Ascending aorta (tissue), 2 donors: ENCODE measurements at regions of chr1 and their contacts with region 1.

Region 1: DNA sequence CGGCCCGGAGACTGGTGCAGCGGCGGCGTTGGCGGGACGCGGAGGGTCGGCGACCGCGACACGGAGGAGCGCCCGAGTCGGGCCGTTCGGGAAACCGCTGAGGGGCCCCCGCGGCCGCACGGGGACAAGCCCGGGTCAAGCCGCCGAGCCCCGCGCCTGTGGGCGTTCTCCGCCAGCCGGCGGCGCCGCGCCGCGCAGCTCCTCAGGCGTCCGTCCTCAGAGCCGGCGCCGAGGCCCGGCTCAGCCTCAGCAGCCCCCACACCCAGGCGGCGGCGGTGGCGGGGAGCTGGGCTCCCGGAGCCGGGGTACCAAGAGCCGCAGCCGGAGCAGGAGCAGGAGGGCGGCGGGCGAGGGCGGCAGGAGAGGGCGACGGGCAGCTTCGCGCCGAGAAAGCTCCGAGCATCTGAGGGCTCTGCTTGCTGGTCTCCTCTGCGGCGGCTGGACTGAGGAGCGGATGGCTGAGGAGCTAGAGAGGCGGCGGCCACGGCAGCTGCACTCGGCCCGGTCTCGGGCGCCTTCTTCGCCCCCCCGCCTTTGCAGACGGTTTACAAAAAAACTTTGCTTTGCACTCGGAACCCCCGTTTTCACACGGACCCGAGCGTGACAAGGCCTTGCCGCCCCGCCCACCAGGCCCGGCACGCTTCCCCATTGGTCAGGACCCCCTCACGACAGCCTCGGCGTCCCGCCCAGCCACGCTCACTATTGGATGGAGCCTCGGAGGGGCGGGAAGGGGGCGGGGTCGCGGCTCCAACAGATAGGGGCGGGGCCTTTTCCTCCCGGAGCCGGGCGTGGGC is at the start of gene SLC30A1:
- DNase-seq: peak; percentile 98 to 100
- H3K4me3 ChIP-seq: peak within 1 kb of the TSS; percentile 61 to 73
- H3K27ac ChIP-seq: peak within 1 kb of the TSS; percentile 92 to 97
- H3K4me1 ChIP-seq: peaks cover 9 to 46% of the 10 kb centered on the region in 2 donors
- H3K27me3 ChIP-seq: no peaks in the 10 kb centered on the region
- CTCF ChIP-seq: no peak
- total RNA-seq, gene SLC30A1: 8.9 TPM

Region 2: DNA sequence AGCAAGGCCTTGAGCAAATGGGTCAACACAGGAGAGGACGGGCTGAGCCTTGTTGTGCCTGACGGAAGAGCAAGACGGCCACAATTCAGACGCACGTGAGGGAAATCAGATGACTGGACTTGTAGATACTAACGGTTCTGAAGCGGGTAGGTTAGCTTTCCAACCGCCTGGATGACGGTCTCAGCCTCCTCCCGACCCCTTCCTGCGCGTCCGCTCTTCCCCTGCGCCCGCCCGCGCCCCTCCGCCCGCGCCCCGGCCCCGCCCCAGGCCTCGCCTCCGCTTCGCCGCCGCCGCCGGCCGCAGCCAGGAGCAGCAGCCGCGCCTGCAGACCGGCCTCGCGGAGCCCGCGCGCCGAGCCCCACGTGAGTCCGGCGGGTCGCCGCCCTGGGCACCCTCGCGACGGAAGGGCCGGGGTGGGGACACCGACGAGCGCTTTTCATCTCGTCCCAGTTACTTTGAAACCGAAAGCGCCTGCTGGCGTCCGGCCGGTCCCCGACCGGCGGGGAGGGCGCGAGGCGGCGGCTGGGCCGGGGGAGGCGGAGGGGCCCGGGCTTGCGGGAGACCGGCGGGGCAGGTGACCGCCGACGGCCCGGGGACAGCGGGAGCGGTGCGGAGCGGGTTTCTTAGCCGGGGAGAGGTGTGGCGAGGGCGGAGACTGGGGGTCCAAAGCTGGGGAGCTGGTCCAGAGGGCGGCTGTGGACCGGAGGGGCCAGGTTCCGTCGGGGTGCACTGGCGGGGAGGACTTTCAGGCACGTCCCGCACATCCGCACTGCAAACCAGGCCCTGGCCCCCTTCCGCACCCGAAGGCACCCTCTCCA is 252.1 kb before region 1 on chr1 and contains the start of gene TRAF5:
- intact Hi-C with region 1: loop called (anchors 5 kb)
- DNase-seq: peak in 1 of 2 donors; percentile 72
- H3K4me3 ChIP-seq: peak within 1 kb of the TSS; percentile 91 to 93
- H3K27ac ChIP-seq: peak within 1 kb of the TSS; percentile 84 to 98
- H3K4me1 ChIP-seq: peaks cover 15 to 31% of the 10 kb centered on the region in 2 donors
- H3K27me3 ChIP-seq: no peaks in the 10 kb centered on the region
- CTCF ChIP-seq: no peak
- total RNA-seq, gene TRAF5: 3.9 TPM

Region 3: GRCh38 chr1:211469938-211470529 is 108.8 kb before region 1 on chr1:
- intact Hi-C with region 1: loop called (anchors 5 kb)
- DNase-seq: peak; percentile 15 to 87
- H3K4me3 ChIP-seq: no peak overlapping the region
- H3K27ac ChIP-seq: no peak overlapping the region
- H3K4me1 ChIP-seq: peaks cover 0 to 5% of the 10 kb centered on the region in 2 donors
- H3K27me3 ChIP-seq: no peaks in the 10 kb centered on the region
- CTCF ChIP-seq: peak; percentile 63 to 88 (median 82)

Region 4: GRCh38 chr1:211551628-211552460 is 27.0 kb before region 1 on chr1:
- intact Hi-C with region 1: loop called (anchors 2 kb)
- DNase-seq: peak in 1 of 2 donors; percentile 68
- H3K4me3 ChIP-seq: peak overlapping the region in 1 of 2 donors; percentile 27
- H3K27ac ChIP-seq: peak overlapping the region; percentile 58 to 62
- H3K4me1 ChIP-seq: peaks cover 0 to 24% of the 10 kb centered on the region in 2 donors
- H3K27me3 ChIP-seq: no peaks in the 10 kb centered on the region
- CTCF ChIP-seq: no peak

Region 5: DNA sequence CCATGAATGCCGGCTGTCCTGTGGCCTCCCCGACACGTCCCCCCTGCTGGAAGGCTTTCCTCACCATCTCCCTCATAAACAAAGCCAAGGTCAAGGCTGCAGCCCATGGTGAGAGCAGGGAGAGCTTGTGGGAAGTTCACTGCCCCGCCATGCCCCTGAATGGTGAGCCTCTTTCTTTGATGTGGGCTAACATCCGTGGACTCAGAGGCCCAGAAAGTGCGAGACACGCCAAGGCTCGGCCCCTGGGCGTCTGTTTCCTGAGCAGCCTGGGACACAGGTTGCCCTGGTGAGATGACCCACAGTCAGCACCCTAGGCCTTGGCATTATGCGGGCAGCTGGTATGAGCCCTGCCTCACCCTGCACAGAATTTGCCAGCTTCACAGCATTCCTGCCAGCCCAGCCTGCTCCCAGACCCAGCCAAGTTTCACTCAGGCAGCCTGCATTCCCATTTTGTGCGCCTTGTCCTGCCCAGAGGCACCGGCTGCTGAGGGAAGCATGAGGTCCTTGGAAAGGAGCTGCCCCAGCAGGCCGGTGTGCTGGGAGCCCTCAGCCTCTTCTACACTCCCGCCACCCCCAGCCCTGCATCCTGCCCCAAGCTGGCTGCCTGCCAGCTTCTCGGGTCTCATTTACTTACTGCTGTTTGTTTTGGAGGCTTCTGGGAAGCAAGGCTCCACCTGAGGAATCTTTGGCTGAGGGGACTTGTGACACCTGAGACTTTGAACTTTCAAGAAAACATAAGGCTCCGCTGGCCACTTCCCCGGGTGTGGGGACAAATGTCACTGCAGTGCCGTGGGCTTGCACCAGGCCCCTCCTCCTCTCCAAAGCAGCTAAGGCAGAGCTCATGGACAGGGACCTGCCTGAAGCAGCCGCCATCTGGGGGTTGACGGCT is 64.7 kb after region 1 on chr1:
- intact Hi-C with region 1: loop called (anchors 1 kb)
- DNase-seq: peak; percentile 54 to 90
- H3K4me3 ChIP-seq: peak overlapping the region in 1 of 2 donors; percentile 1
- H3K27ac ChIP-seq: peak overlapping the region; percentile 78
- H3K4me1 ChIP-seq: peaks cover 5 to 16% of the 10 kb centered on the region in 2 donors
- H3K27me3 ChIP-seq: no peaks in the 10 kb centered on the region
- CTCF ChIP-seq: no peak

Region 6: DNA sequence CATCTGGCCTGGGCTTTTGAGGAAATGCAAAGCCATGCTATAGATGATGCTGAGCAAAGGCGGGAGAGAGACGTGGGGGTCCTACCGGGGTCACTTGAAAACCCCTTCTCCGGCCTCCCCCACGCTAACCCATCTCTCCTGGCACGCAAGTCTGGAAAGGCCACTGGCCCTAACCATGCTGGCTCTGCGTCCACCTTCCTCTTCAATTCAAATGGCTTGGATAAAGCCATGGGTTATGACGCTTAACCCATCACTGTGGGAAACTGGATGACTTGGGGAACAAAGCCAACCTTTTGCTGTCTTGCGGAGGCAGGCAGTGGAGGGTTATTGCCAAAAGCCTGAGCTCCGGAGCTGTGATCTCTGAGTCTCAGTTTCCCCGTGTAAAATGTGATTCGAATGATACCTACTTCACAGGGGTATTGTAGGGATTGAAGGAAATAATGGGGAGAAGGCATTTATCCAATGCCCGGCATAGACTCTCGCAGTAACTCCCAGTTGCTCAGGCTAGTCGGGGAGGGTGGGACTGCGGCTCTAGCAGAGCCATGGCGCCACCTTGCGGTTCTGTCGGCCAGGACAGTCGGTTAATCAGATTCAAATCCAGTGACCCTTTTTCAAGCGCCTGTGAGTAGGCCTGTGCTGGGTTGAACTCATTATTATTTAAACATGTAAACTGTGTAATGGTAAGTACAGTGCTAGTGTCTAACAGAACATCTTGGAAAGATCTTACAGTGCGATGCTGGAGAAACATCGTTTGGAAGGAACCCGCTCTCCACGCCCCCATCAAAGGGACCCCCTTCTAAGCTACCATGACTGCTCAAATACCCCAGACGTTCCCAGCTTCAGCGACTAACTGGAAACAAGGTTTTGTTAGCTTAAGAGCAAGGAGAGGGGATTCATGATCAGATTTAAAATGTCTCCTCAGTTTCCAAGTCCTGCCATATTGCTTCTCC is 76.3 kb after region 1 on chr1:
- intact Hi-C with region 1: loop called (anchors 1 kb)
- DNase-seq: peak in 1 of 2 donors; percentile 94
- H3K4me3 ChIP-seq: peak overlapping the region in 1 of 2 donors; percentile 24
- H3K27ac ChIP-seq: no peak overlapping the region
- H3K4me1 ChIP-seq: no peaks in the 10 kb centered on the region
- H3K27me3 ChIP-seq: no peaks in the 10 kb centered on the region
- CTCF ChIP-seq: peak; percentile 85 to 89 (median 87)

Region 7: GRCh38 chr1:212284744-212285684 is 706.2 kb after region 1 on chr1 and contains the start of gene PPP2R5A:
- intact Hi-C with region 1: loop called (anchors 2 kb)
- DNase-seq: peak; percentile 98 to 100
- H3K4me3 ChIP-seq: peak within 1 kb of the TSS; percentile 74 to 88
- H3K27ac ChIP-seq: peak within 1 kb of the TSS; percentile 97 to 99
- H3K4me1 ChIP-seq: peaks cover 3 to 20% of the 10 kb centered on the region in 2 donors
- H3K27me3 ChIP-seq: no peaks in the 10 kb centered on the region
- CTCF ChIP-seq: peak; percentile 8 to 23 (median 11)
- total RNA-seq, gene PPP2R5A: 64.7 TPM